ENCODE measurements at regions of chr16 and their contacts with region 1.

Region 1: GRCh38 chr16:3797904-3798811 is 80.8 kb upstream of the TRAP1 start:
- DNase-seq: peak in 2 of 9 experiments; percentile 28 to 40
- ATAC-seq: no peak
- H3K4me3 ChIP-seq: no peak overlapping the region
- H3K4me3 Mint-ChIP-seq: peak overlapping the region; percentile 58
- H3K27ac ChIP-seq: no peak overlapping the region
- H3K27ac Mint-ChIP-seq: no peak overlapping the region
- H3K4me1 ChIP-seq: peaks cover 60% of the 10 kb centered on the region
- H3K4me1 Mint-ChIP-seq: peaks cover 78% of the 10 kb centered on the region
- H3K27me3 ChIP-seq: no peaks in the 10 kb centered on the region
- H3K27me3 Mint-ChIP-seq: no peaks in the 10 kb centered on the region
- CTCF ChIP-seq: no peak

Region 2: DNA sequence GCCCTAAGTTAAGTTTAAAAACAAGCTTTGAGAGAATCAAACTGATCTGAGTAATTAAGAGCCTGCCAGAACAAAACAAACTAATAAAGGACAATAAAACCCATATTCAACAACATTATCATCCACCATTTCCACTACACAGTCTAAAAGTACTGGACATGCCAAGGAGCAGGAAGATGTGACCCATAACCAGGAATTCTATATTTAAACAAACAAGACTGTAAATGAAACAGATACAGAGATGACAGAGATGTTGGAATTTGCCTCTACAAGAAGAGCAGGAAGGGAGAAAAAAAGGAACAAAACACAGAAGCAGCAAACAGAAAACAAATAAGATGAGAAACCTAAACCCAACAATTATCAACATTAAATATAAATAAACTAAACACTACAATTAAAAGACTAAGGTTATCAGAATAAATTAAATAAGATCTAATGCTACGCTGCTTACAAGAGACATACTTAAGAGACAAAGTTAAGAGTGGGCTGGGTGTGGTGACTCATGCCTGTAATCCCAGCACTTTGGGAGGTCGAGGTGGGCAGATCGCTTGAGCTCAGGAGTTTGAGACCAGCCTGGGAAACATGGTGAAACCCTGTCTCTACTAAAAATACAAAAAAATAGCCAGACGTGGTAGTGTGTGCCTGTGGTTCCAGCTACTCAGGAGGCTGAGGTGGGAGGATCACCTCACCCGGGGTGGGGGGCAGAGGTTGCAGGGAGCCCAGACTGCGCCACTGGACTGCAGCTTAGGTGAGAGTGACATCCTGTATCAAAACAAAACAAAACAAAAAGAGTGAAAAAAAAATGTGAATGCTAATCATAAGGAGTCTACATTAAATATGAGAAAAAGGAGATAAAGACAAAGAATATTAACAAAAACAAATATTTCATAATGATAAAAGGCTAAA is 31.7 kb after region 1 on chr16:
- CTCF ChIA-PET with region 1: no interaction called
- POLR2A ChIA-PET with region 1: no interaction called
- intact Hi-C with region 1: loop called in 1 of 2 experiments (anchors 5 kb)
- DNase-seq: no peak
- ATAC-seq: no peak
- H3K4me3 ChIP-seq: no peak overlapping the region
- H3K4me3 Mint-ChIP-seq: no peak overlapping the region
- H3K27ac ChIP-seq: no peak overlapping the region
- H3K27ac Mint-ChIP-seq: no peak overlapping the region
- H3K4me1 ChIP-seq: peaks cover 25% of the 10 kb centered on the region
- H3K4me1 Mint-ChIP-seq: peaks cover 69% of the 10 kb centered on the region
- H3K27me3 ChIP-seq: no peaks in the 10 kb centered on the region
- H3K27me3 Mint-ChIP-seq: no peaks in the 10 kb centered on the region
- CTCF ChIP-seq: no peak

Measured in CD8-positive, alpha-beta T cell (primary cell).